T-cell (primary cell): ENCODE measurements at regions of chrX and their contacts with region 1.

Region 1: GRCh38 chrX:153667956-153668396 is 5.6 kb downstream of the PNCK start:
- DNase-seq: peak in 34 of 35 experiments; percentile 25 to 84 (median 63)
- ATAC-seq: peak; percentile 73 to 86 (median 78)
- H3K4me3 ChIP-seq: no peak overlapping the region
- H3K4me3 Mint-ChIP-seq: peak overlapping the region; percentile 47 to 65 (median 49)
- H3K27ac ChIP-seq: no peak overlapping the region
- H3K27ac Mint-ChIP-seq: no peak overlapping the region
- H3K4me1 ChIP-seq: peaks cover 0 to 19% of the 10 kb centered on the region in 2 experiments
- H3K4me1 Mint-ChIP-seq: peaks cover 5 to 10% (median 8%) of the 10 kb centered on the region in 3 donors
- H3K27me3 ChIP-seq: peaks cover 0 to 37% of the 10 kb centered on the region in 2 experiments
- H3K27me3 Mint-ChIP-seq: peaks cover 17 to 32% of the 10 kb centered on the region in 2 donors

Region 2: GRCh38 chrX:152958524-152959465 is 709.2 kb before region 1 on chrX:
- CTCF ChIA-PET with region 1: interaction called in 1 of 2 experiments, 10 read pairs
- POLR2A ChIA-PET with region 1: no interaction called
- DNase-seq: peak; percentile 79 to 95 (median 87)
- ATAC-seq: peak; percentile 98 to 99 (median 98)
- H3K4me3 ChIP-seq: peak overlapping the region; percentile 27 to 28
- H3K4me3 Mint-ChIP-seq: peak overlapping the region; percentile 70 to 75 (median 71)
- H3K27ac ChIP-seq: peak overlapping the region; percentile 71
- H3K27ac Mint-ChIP-seq: peak overlapping the region; percentile 88 to 91
- H3K4me1 ChIP-seq: peaks cover 0 to 12% of the 10 kb centered on the region in 2 experiments
- H3K4me1 Mint-ChIP-seq: peaks cover 9 to 15% (median 14%) of the 10 kb centered on the region in 3 donors
- H3K27me3 ChIP-seq: no peaks in the 10 kb centered on the region
- H3K27me3 Mint-ChIP-seq: peaks cover 0 to 19% of the 10 kb centered on the region in 2 donors

Region 3: GRCh38 chrX:153554519-153555167 is 113.3 kb before region 1 on chrX:
- CTCF ChIA-PET with region 1: interaction called, 8 to 12 read pairs
- POLR2A ChIA-PET with region 1: no interaction called
- DNase-seq: peak; percentile 22 to 72 (median 48)
- ATAC-seq: peak; percentile 50 to 77 (median 68)
- H3K4me3 ChIP-seq: no peak overlapping the region
- H3K4me3 Mint-ChIP-seq: no peak overlapping the region
- H3K27ac ChIP-seq: no peak overlapping the region
- H3K27ac Mint-ChIP-seq: no peak overlapping the region
- H3K4me1 ChIP-seq: peaks cover 0 to 6% of the 10 kb centered on the region in 2 experiments
- H3K4me1 Mint-ChIP-seq: peaks cover 0 to 5% (median 0%) of the 10 kb centered on the region in 3 donors
- H3K27me3 ChIP-seq: peaks cover 2 to 10% of the 10 kb centered on the region in 2 experiments
- H3K27me3 Mint-ChIP-seq: peaks cover 0 to 28% of the 10 kb centered on the region in 2 donors

Region 4: DNA sequence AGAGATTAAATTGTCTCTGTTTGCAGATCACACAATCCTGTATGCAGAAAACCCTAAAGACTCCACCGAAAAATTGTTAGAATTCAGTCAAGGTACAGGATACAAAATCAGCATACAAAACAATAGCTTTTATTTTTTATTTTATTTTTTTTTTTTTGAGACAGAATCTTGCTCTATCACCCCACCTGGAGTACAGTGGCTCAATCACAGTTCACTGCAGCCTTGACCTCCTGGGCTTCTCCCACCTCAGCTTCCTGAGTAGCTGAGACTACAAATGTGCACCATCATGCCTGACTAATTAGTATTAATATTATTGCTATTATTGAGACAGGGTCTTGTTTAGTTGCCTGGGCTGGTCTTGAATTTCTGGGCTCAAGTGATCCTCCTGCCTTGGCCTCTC is 87.2 kb after region 1 on chrX:
- CTCF ChIA-PET with region 1: interaction called in 1 of 2 experiments, 10 read pairs
- POLR2A ChIA-PET with region 1: no interaction called
- DNase-seq: no peak
- ATAC-seq: no peak
- H3K4me3 ChIP-seq: no peak overlapping the region
- H3K4me3 Mint-ChIP-seq: no peak overlapping the region
- H3K27ac ChIP-seq: no peak overlapping the region
- H3K27ac Mint-ChIP-seq: no peak overlapping the region
- H3K4me1 ChIP-seq: no peaks in the 10 kb centered on the region
- H3K4me1 Mint-ChIP-seq: peaks cover 0 to 5% (median 0%) of the 10 kb centered on the region in 3 donors
- H3K27me3 ChIP-seq: no peaks in the 10 kb centered on the region
- H3K27me3 Mint-ChIP-seq: peaks cover 0 to 20% of the 10 kb centered on the region in 2 donors

Region 5: DNA sequence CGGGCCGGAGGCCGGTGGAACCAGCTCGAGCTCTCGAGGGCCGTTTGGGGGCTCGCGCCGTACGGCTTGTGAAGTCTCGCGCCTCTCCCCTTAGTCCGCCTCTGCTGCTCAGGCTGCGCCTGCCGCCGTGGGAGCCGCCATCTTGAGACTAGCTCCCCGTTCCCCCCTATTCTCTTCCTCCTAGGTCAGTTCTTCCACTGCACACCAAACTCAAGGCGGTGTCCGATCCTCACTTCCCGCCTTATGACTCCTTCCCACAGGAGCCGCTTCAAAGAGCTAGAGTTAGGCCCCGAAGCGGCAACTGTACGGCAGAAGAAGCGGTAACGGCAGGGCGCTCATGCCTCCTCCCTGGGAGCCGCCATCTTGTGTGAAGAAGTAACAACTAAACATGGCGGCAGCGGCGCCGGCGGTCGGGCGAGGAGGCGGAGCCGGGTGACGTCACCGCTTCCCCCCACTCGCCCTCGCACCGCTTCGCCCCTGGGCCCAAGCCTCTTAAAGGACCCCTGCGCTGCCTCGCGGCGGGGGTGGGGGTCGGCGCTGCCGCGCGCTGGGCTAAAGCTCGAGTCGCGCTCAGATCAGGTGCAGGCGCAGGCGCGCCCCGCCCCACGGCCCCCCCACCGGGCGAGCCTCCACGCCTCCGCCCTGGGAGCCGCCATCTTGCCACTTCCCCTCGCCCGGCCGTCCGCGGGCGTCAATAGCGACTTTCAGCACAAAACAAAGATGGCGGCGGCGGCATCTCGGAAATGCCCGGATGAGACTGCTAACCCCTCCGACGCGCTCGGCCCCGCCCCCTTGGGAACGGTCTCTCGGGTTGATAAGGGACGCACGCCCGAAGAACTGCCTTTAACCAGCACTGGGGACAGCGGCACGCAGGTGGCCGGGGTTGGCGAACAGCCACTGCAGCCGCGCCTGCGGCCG is 303.7 kb after region 1 on chrX and contains the start of gene HCFC1:
- CTCF ChIA-PET with region 1: no interaction called
- POLR2A ChIA-PET with region 1: no interaction called
- DNase-seq: peak; percentile 84 to 95 (median 89)
- ATAC-seq: peak; percentile 49 to 56 (median 52)
- H3K4me3 ChIP-seq: peak within 1 kb of the TSS; percentile 97 to 99
- H3K4me3 Mint-ChIP-seq: peak within 1 kb of the TSS; percentile 88 to 100 (median 100)
- H3K27ac ChIP-seq: peak within 1 kb of the TSS; percentile 99
- H3K27ac Mint-ChIP-seq: peak within 1 kb of the TSS; percentile 100
- H3K4me1 ChIP-seq: peaks cover 6 to 50% of the 10 kb centered on the region in 2 experiments
- H3K4me1 Mint-ChIP-seq: peaks cover 44 to 52% (median 46%) of the 10 kb centered on the region in 3 donors
- H3K27me3 ChIP-seq: no peaks in the 10 kb centered on the region
- H3K27me3 Mint-ChIP-seq: no peaks in the 10 kb centered on the region
- total RNA-seq, gene HCFC1: 67.1 to 73.4 (median 69.2) TPM